GM23248 (cell line): ENCODE measurements at regions of chr15 and their contacts with region 1.

Region 1: DNA sequence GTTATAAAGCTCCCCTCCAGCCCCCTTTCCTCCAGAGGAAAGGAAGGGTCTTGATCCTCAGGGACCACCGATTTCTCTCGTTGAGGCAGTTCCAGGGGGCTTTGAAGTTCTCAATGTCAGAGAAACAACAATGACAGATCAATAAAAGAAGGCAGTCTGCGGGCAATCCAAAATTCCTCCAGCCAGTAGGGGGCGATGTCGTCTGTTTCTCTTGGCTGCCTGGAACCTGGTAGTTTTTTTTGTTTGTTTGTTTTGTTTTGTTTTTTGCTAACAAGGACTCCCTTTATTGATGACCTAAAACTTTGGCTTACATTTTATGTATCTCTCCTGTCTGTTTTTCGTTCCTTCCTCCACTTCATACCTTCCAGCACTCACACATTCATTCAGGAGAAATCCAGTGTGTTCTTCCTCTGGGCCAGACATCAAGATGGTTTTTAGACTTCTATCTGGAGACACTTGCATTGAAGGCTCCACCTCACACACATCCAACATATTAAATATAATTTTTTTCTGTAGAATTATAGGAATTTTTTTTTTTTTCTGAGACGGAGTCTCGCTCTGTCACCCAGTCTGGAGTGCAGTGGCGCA is 276.6 kb downstream of the RPLP1 start:
- DNase-seq: peak; percentile 46
- H3K4me3 ChIP-seq: no peak overlapping the region
- H3K27ac ChIP-seq: no peak overlapping the region
- H3K4me1 ChIP-seq: no peaks in the 10 kb centered on the region
- H3K27me3 ChIP-seq: peaks cover 29% of the 10 kb centered on the region

Region 2: DNA sequence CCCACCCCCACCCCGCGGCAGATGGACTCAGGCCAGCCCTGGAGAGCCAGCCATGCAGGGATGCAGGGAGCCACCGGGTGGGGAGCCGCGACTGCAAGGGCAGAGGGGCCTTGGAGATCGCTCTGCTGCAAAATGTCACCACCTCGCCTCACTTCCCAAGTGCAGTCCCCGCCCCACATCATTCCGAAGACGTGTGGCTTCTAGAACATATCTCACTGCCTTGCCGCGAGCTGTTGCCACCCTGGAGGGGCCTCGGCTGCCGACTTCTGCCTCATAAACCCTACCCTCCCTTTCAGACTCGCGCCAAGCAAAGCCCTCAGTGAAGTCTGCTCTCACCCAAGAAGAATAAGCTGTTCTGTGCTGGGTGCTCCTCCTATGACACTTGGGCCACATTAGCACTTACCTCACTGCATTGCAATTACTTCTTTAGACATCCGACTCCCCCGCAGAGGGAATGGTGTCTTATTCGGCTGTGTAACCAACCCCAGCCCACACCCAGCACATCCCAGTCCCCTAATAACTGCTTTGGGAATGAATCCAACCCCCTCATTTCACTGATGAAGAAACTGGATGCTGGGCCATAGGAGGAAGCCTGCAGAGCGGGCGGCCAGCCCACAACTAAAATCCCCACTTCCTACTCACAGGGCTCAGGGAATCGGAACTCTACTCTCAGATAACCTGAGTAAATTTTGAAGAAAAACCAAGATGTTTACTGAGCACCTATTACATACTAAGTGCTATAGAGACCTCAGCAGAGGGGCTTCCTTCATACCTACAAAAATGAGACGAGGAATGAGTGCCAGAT is 359.8 kb after region 1 on chr15:
- in situ Hi-C with region 1: loop called (anchors 10 kb)
- DNase-seq: peak; percentile 88
- H3K4me3 ChIP-seq: peak overlapping the region; percentile 39
- H3K27ac ChIP-seq: peak overlapping the region; percentile 81
- H3K4me1 ChIP-seq: peaks cover 27% of the 10 kb centered on the region
- H3K27me3 ChIP-seq: no peaks in the 10 kb centered on the region